Naive thymus-derived CD4-positive, alpha-beta T cell (primary cell): ENCODE measurements at regions of chr2 and their contacts with region 1.

Region 1: DNA sequence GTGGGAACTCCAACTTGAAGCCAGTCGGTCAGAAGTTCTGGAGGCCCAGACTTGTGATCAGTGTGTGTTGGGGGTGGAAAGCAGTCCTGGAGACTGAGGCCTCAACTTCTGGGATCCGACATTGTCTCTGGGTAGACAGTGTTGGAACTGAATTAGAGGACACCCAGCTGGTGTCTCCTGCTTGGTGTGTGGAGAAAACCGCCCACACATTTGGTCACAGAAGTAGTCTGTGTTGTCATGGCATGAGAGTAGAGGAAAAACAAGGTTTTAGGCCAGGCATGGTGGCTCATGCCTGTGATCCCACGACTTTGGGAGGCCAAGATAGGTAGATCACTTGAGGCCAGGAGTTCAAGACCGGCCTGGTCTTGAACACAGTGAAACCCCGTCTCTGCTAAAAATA is 51.5 kb downstream of the PUM2 start:
- DNase-seq: no peak
- ATAC-seq: no peak
- H3K4me3 ChIP-seq: no peak overlapping the region
- H3K4me3 Mint-ChIP-seq: no peak overlapping the region
- H3K27ac ChIP-seq: no peak overlapping the region
- H3K27ac Mint-ChIP-seq: peak overlapping the region in 3 of 9 donors; percentile 23 to 59 (median 41)
- H3K4me1 ChIP-seq: no peaks in the 10 kb centered on the region
- H3K4me1 Mint-ChIP-seq: peaks cover 11 to 34% (median 16%) of the 10 kb centered on the region in 7 donors
- H3K27me3 ChIP-seq: no peaks in the 10 kb centered on the region
- H3K27me3 Mint-ChIP-seq: no peaks in the 10 kb centered on the region

Region 2: DNA sequence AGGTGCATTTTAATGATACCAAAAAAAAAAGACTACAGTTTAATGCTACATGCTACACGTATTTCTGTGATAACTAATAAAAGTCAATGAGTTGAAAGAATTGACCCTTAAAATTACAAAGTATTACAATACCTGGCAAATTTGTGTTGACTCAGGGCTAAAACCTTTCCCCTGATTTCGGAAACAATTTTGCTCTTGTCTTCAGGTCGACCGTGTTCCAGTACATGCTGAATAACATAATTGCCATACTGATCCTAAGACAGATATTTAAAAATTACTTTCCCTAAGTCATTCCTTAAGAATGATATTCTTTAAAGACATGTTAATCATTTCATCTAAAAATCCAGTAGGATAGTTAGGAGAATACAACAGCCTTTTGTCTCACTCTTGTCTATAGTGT is 44.4 kb before region 1 on chr2:
- CTCF ChIA-PET with region 1: no interaction called
- POLR2A ChIA-PET with region 1: no interaction called
- intact Hi-C with region 1: loop called in 1 of 2 experiments (anchors 5 kb)
- DNase-seq: no peak
- ATAC-seq: no peak
- H3K4me3 ChIP-seq: no peak overlapping the region
- H3K4me3 Mint-ChIP-seq: no peak overlapping the region
- H3K27ac ChIP-seq: no peak overlapping the region
- H3K27ac Mint-ChIP-seq: no peak overlapping the region
- H3K4me1 ChIP-seq: no peaks in the 10 kb centered on the region
- H3K4me1 Mint-ChIP-seq: no peaks in the 10 kb centered on the region
- H3K27me3 ChIP-seq: no peaks in the 10 kb centered on the region
- H3K27me3 Mint-ChIP-seq: no peaks in the 10 kb centered on the region

Region 3: DNA sequence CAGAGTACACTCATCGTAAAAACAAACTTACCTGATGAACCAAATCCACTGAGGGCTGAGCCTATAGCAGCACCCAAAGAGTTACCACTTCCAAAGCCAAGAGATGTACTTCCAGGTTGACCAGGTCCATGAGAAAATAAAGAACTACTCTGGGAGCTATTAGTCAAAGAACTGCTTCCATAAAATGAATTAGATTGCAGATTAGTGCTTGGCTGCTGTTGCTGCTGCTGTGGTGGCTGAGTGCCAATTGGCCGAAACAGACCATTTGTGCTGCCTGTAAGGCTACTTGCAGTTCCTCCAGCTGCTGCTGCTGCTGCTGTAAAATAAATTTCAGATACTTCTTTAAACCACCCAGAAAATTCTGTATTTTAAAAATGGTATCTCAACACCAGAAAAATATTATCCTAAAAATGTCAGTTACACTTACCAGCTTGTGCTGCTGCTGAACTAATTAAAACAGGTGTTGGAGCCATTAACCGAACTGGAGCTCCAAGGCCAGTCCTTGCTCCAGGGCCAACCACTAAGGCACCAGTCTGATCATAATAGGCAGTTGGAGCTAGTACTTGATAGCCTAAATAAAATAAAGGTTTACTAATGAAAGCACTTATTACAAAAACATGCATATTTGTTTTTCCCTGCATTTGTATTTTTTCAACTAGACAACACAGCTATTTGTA is 16.1 kb before region 1 on chr2:
- CTCF ChIA-PET with region 1: no interaction called
- POLR2A ChIA-PET with region 1: no interaction called
- intact Hi-C with region 1: loop called in 1 of 2 experiments (anchors 2 kb)
- DNase-seq: no peak
- ATAC-seq: no peak
- H3K4me3 ChIP-seq: no peak overlapping the region
- H3K4me3 Mint-ChIP-seq: no peak overlapping the region
- H3K27ac ChIP-seq: no peak overlapping the region
- H3K27ac Mint-ChIP-seq: peak overlapping the region in 2 of 9 donors; percentile 40 to 79
- H3K4me1 ChIP-seq: peaks cover 0 to 3% of the 10 kb centered on the region in 2 donors
- H3K4me1 Mint-ChIP-seq: peaks cover 6 to 30% (median 18%) of the 10 kb centered on the region in 7 donors
- H3K27me3 ChIP-seq: no peaks in the 10 kb centered on the region
- H3K27me3 Mint-ChIP-seq: no peaks in the 10 kb centered on the region

Region 4: DNA sequence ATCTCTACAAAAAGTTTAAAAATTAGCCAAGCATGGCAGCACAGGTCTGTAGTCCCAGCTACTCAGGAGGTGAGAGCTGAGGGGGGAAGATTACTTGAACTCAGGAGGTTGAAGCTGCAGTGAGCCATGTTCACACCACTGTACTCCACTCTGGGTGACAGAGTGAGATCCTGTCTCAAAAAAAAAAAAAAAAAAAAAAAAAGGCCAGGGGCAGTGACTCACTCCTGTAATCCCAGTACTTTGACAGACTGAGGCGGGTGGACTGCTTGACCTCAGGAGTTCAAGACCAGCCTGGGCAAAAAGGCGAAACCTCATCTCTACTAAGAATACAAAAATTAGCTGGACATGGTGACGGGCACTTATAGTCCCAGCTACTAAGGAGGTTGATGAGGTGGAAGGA is 14.5 kb after region 1 on chr2:
- CTCF ChIA-PET with region 1: no interaction called
- POLR2A ChIA-PET with region 1: no interaction called
- intact Hi-C with region 1: no loop called
- DNase-seq: no peak
- ATAC-seq: no peak
- H3K4me3 ChIP-seq: no peak overlapping the region
- H3K4me3 Mint-ChIP-seq: no peak overlapping the region
- H3K27ac ChIP-seq: no peak overlapping the region
- H3K27ac Mint-ChIP-seq: peak overlapping the region in 2 of 9 donors; percentile 10 to 25
- H3K4me1 ChIP-seq: peaks cover 10 to 14% of the 10 kb centered on the region in 2 donors
- H3K4me1 Mint-ChIP-seq: peaks cover 7 to 54% (median 43%) of the 10 kb centered on the region in 7 donors
- H3K27me3 ChIP-seq: no peaks in the 10 kb centered on the region
- H3K27me3 Mint-ChIP-seq: no peaks in the 10 kb centered on the region

Region 5: GRCh38 chr2:20450204-20450999 is 151.3 kb after region 1 on chr2:
- CTCF ChIA-PET with region 1: no interaction called
- POLR2A ChIA-PET with region 1: no interaction called
- intact Hi-C with region 1: no loop called
- DNase-seq: no peak
- ATAC-seq: no peak
- H3K4me3 ChIP-seq: no peak overlapping the region
- H3K4me3 Mint-ChIP-seq: no peak overlapping the region
- H3K27ac ChIP-seq: no peak overlapping the region
- H3K27ac Mint-ChIP-seq: no peak overlapping the region
- H3K4me1 ChIP-seq: peaks cover 6 to 12% of the 10 kb centered on the region in 2 donors
- H3K4me1 Mint-ChIP-seq: peaks cover 0 to 7% (median 4%) of the 10 kb centered on the region in 7 donors
- H3K27me3 ChIP-seq: peaks cover 0 to 3% of the 10 kb centered on the region in 2 donors
- H3K27me3 Mint-ChIP-seq: peaks cover 11 to 51% (median 17%) of the 10 kb centered on the region in 5 donors

Region 6: DNA sequence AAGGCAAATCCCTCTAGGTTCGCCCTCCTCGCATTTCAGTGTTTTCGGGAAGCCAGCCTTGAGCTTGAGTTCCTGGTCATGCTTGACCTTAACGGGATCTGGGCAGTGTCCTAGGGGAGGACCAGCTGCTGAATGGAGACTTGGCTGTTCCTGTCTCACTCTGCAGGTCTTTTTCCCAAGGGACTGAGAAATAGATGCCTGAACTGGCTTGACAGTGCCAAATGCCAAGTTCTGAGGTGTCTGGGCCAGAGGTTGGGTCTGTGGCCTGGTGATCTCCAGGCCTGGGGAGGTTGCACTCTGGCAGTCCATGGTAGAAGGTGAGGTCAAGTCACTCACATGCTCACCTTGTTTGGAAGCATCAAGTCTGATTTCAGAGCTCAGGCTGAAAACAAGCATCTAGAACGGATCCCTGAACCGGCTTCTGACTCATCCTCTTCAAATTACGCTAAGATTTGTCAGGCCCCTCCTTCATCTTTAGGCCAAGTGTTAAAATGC is 167.4 kb after region 1 on chr2:
- CTCF ChIA-PET with region 1: no interaction called
- POLR2A ChIA-PET with region 1: no interaction called
- intact Hi-C with region 1: no loop called
- DNase-seq: no peak
- ATAC-seq: no peak
- H3K4me3 ChIP-seq: no peak overlapping the region
- H3K4me3 Mint-ChIP-seq: no peak overlapping the region
- H3K27ac ChIP-seq: no peak overlapping the region
- H3K27ac Mint-ChIP-seq: no peak overlapping the region
- H3K4me1 ChIP-seq: no peaks in the 10 kb centered on the region
- H3K4me1 Mint-ChIP-seq: no peaks in the 10 kb centered on the region
- H3K27me3 ChIP-seq: no peaks in the 10 kb centered on the region
- H3K27me3 Mint-ChIP-seq: peaks cover 0 to 23% (median 1%) of the 10 kb centered on the region in 5 donors